Heart left ventricle (tissue), 16 donors: ENCODE measurements at regions of chr7 and their contacts with region 1.

Region 1: DNA sequence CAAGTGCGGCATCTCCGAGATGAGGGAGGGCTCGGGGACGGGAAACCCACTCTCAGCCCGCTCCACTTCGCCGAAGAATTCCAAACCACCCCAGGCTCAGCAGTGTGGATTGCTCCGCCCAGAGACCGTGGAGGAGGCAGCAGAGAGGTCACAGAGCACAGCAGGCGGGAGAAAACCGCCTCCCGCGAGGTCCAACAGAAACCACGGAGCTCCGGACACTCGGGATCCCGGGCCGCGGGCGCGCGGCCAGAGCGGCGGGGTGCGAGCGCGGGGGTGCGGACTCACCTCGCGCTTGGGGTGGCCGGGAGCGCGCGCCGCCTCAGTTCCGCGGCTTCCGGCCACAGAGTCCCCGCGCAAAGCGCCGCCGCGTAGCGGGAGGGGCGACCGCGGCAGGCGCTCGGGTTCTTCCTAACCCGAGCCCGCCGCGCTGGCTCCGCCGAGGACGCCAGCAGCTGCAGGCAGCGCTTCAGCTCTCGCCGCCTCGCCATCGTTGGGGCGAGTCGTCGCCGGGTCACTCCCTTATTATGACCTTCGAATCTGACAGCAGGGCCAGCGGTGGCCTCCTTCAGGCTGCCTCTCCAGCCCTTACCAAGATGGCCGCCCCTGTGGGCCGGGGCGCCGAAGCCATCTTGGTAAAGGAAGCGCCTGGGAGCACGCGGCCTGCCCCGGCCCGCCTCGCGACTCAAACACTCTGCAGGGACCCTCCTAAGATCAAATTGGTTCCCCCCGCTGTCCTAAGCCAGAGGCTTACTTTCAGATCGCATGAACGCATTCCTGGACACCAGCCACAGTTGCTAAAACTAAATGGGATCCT is at the start of gene NAPEPLD:
- DNase-seq: peak; percentile 89 to 94 (median 93)
- ATAC-seq: peak; percentile 93 to 97 (median 95)
- H3K4me3 ChIP-seq: peak within 1 kb of the TSS; percentile 36 to 91 (median 79)
- H3K27ac ChIP-seq: peak within 1 kb of the TSS; percentile 90 to 100 (median 97)
- H3K4me1 ChIP-seq: peaks cover 0 to 24% (median 18%) of the 10 kb centered on the region in 12 donors
- H3K27me3 ChIP-seq: no peaks in the 10 kb centered on the region
- CTCF ChIP-seq: no peak
- POLR2A ChIP-seq: peak in 1 of 2 donors; percentile 56
- total RNA-seq, gene NAPEPLD: 5.5 to 12.8 (median 8.4) TPM

Region 2: DNA sequence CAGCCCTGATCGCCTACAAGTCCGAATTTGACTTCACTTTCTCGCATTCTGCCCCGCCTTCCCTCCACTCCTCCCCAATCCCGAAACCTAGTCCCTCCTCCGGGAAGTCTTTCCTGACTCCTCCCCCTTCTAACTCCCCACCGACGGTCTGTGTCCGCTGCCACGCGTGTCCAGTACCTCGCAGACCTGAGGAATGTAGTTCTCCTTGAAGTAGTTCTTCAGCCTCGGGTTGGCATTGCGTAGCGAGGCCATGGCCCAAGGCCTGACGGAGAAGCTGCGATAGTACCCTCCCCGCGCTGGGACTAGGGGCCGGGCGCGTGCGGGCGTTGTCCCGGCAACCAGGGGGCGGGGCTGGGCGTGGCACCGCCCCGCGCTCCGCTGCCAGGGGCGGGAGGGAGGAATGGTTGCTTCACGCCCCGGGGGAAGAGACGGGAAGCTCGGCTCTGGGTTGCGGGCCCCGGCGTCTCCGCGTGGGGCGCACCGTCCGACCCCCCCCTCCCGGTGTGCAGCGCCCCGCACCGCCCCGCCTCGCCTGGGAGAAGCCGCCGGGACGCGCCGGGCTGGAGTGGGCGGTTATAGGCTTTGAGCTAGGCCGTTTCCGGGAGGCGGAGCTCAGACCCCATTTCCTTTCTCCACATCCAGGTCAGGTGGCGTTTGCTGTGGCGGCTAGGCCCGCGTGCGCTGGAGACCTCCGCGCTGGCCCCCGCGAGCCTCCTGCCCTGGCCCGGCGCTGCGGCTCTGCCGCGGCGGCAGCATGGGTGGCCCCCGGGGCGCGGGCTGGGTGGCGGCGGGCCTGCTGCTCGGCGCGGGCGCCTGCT is 74.5 kb before region 1 on chr7 and contains the starts of genes ARMC10 and FBXL13:
- intact Hi-C with region 1: loop called in 3 of 10 experiments (anchors 2 to 10 kb)
- DNase-seq: peak; percentile 90 to 92 (median 92)
- ATAC-seq: peak; percentile 87 to 98 (median 97)
- H3K4me3 ChIP-seq: peak within 1 kb of the TSS; percentile 53 to 99 (median 86)
- H3K27ac ChIP-seq: peak within 1 kb of the TSS; percentile 86 to 96 (median 93)
- H3K4me1 ChIP-seq: peaks cover 0 to 30% (median 16%) of the 10 kb centered on the region in 12 donors
- H3K27me3 ChIP-seq: no peaks in the 10 kb centered on the region
- CTCF ChIP-seq: peak in 9 of 12 donors; percentile 18 to 53 (median 28)
- POLR2A ChIP-seq: peak in 1 of 2 donors; percentile 64
- total RNA-seq, gene ARMC10: 13.5 to 29.7 (median 24.9) TPM
- total RNA-seq, gene FBXL13: 0.16 to 1.2 (median 0.55) TPM in 8 of 9 donors, not detected in the other

Region 3: DNA sequence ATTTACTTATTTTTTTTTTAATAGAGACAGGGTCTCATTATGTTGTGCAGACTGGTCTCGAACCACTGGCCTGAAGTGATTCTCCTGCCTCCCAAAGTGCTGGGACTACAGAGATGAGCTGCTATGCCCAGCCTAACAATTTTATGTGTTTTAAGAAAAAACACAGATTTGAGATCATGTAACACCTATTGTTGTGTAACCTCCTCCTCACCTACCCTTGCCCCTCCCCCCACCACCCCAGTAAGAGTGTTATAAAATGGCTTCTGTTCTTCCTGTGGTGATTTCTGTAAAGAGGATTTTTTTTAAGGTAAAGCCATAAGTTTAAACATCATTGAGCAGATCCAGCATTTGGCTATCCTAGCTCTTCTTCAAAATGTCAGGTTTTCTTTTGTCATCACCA is 66.7 kb before region 1 on chr7:
- intact Hi-C with region 1: loop called in 3 of 10 experiments (anchors 5 to 10 kb)
- DNase-seq: no peak
- ATAC-seq: no peak
- H3K4me3 ChIP-seq: no peak overlapping the region
- H3K27ac ChIP-seq: no peak overlapping the region
- H3K4me1 ChIP-seq: peaks cover 0 to 2% (median 0%) of the 10 kb centered on the region in 12 donors
- H3K27me3 ChIP-seq: no peaks in the 10 kb centered on the region
- CTCF ChIP-seq: no peak
- POLR2A ChIP-seq: no peak

Region 4: DNA sequence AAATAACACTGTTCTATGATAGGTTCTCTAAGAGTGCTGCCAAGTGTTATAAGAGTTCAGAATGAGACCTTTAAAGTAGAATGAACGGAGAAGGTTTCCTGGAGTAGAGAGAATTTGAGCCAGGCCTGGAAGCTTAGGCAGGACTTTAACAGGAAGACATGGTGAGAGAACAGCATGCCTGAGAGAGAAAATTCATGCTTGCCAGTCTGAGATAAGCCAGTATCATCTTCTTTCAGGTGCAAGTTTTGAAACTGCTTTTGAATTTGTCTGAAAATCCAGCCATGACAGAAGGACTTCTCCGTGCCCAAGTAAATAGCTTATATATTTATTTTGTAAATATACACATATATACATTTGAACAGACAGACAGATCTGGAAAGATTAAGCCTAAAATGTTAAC is 52.2 kb before region 1 on chr7:
- intact Hi-C with region 1: no loop called
- DNase-seq: no peak
- ATAC-seq: no peak
- H3K4me3 ChIP-seq: no peak overlapping the region
- H3K27ac ChIP-seq: no peak overlapping the region
- H3K4me1 ChIP-seq: no peaks in the 10 kb centered on the region
- H3K27me3 ChIP-seq: no peaks in the 10 kb centered on the region
- CTCF ChIP-seq: no peak
- POLR2A ChIP-seq: no peak